Endothelial cell of umbilical vein (primary cell): ENCODE measurements at regions of chr10 and their contacts with region 1.

Region 1: DNA sequence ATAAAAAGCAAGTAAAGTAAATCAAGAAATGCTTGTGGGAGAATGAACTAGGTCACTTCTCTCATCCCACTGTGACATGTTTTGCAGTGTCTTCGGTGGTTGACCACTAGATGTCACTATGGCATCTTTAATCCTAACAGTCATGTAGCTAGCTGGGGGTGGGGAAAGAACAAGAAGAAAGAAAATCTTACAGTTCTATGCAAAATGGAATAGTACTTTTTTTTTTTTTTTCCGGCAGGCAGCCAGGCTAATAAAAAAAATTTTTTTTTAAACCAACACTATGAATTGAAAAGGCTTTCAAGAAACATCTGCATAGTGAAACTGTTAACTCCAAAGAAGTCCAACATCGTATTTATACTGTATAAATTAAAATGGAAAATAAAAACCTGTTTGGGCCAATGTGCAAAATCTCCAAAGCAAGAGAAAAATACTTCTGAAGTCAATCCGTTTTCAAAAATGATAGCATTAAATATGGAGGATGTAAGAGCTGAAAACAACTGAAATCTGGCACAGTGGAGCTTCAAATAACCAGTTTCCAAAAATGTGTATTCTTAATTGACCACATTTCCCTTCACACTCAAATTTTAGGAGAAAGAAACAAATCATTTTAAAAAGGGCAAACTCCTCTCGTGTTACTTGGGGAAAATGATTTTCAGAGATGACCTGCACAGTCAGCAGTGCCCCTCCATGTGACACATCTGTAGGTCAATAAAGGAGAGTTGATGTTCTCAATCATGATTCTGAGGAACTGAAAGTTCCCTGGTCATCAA is 38.5 kb downstream of the CDK1 start:
- DNase-seq: peak; percentile 88
- H3K4me3 ChIP-seq: no peak overlapping the region
- H3K27ac ChIP-seq: peak overlapping the region; percentile 36
- H3K4me1 ChIP-seq: peaks cover 26% of the 10 kb centered on the region
- H3K27me3 ChIP-seq: no peaks in the 10 kb centered on the region
- CTCF ChIP-seq: peak; percentile 64 to 71
- POLR2A ChIP-seq: no peak

Region 2: GRCh38 chr10:60944159-60944909 is 127.5 kb after region 1 on chr10 and contains the start of gene RHOBTB1:
- CTCF ChIA-PET with region 1: interaction called, 16 read pairs
- POLR2A ChIA-PET with region 1: no interaction called
- dilution Hi-C with region 1: no loop called
- intact Hi-C with region 1: loop called (anchors 1 kb)
- DNase-seq: peak; percentile 85
- H3K4me3 ChIP-seq: peak within 1 kb of the TSS; percentile 74 to 91 (median 86)
- H3K27ac ChIP-seq: peak within 1 kb of the TSS; percentile 98
- H3K4me1 ChIP-seq: peaks cover 18% of the 10 kb centered on the region
- H3K27me3 ChIP-seq: no peaks in the 10 kb centered on the region
- CTCF ChIP-seq: no peak
- POLR2A ChIP-seq: peak; percentile 71
- total RNA-seq, gene RHOBTB1: 31.0 and 31.3 TPM in 2 replicates

Region 3: GRCh38 chr10:61189912-61190311 is 373.1 kb after region 1 on chr10:
- CTCF ChIA-PET with region 1: interaction called, 13 read pairs
- POLR2A ChIA-PET with region 1: no interaction called
- dilution Hi-C with region 1: no loop called
- intact Hi-C with region 1: loop called (anchors 2 kb)
- DNase-seq: no peak
- H3K4me3 ChIP-seq: no peak overlapping the region
- H3K27ac ChIP-seq: no peak overlapping the region
- H3K4me1 ChIP-seq: no peaks in the 10 kb centered on the region
- H3K27me3 ChIP-seq: no peaks in the 10 kb centered on the region
- CTCF ChIP-seq: no peak
- POLR2A ChIP-seq: no peak

Region 4: GRCh38 chr10:61592581-61592980 is 775.8 kb after region 1 on chr10:
- CTCF ChIA-PET with region 1: interaction called, 3 read pairs
- POLR2A ChIA-PET with region 1: no interaction called
- dilution Hi-C with region 1: no loop called
- intact Hi-C with region 1: loop called (anchors 2 kb)
- DNase-seq: peak; percentile 7
- H3K4me3 ChIP-seq: no peak overlapping the region
- H3K27ac ChIP-seq: no peak overlapping the region
- H3K4me1 ChIP-seq: peaks cover 17% of the 10 kb centered on the region
- H3K27me3 ChIP-seq: no peaks in the 10 kb centered on the region
- CTCF ChIP-seq: peak; percentile 23 to 40
- POLR2A ChIP-seq: no peak

Region 5: GRCh38 chr10:61903221-61903927 is 1086.6 kb after region 1 on chr10:
- CTCF ChIA-PET with region 1: interaction called, 3 read pairs
- POLR2A ChIA-PET with region 1: no interaction called
- dilution Hi-C with region 1: no loop called
- intact Hi-C with region 1: loop called (anchors 2 kb)
- DNase-seq: no peak
- H3K4me3 ChIP-seq: peak overlapping the region; percentile 26 to 79 (median 65)
- H3K27ac ChIP-seq: peak overlapping the region; percentile 59
- H3K4me1 ChIP-seq: peaks cover 28% of the 10 kb centered on the region
- H3K27me3 ChIP-seq: no peaks in the 10 kb centered on the region
- CTCF ChIP-seq: peak; percentile 5 to 18
- POLR2A ChIP-seq: no peak

Region 6: GRCh38 chr10:62816331-62817120 is 1999.7 kb after region 1 on chr10 and contains the start of gene EGR2:
- CTCF ChIA-PET with region 1: no interaction called
- POLR2A ChIA-PET with region 1: no interaction called
- dilution Hi-C with region 1: no loop called
- intact Hi-C with region 1: loop called (anchors 5 kb)
- DNase-seq: peak; percentile 91
- H3K4me3 ChIP-seq: peak within 1 kb of the TSS; percentile 45 to 91 (median 51)
- H3K27ac ChIP-seq: peak within 1 kb of the TSS; percentile 32
- H3K4me1 ChIP-seq: peaks cover 24% of the 10 kb centered on the region
- H3K27me3 ChIP-seq: peaks cover 50 to 60% of the 10 kb centered on the region in 2 experiments
- CTCF ChIP-seq: no peak
- POLR2A ChIP-seq: no peak
- total RNA-seq, gene EGR2: 0.46 and 0.67 TPM in 2 replicates